ENCODE measurements at regions of chr3 and their contacts with region 1.

Region 1: GRCh38 chr3:138329127-138329983 is at the start of gene NME9:
- DNase-seq: peak; percentile 93
- H3K4me3 ChIP-seq: peak within 1 kb of the TSS; percentile 80
- H3K4me3 Mint-ChIP-seq: peak within 1 kb of the TSS; percentile 80
- H3K27ac Mint-ChIP-seq: peak within 1 kb of the TSS; percentile 68
- H3K4me1 ChIP-seq: no peaks in the 10 kb centered on the region
- H3K4me1 Mint-ChIP-seq: no peaks in the 10 kb centered on the region
- H3K27me3 ChIP-seq: no peaks in the 10 kb centered on the region
- H3K27me3 Mint-ChIP-seq: no peaks in the 10 kb centered on the region
- CTCF ChIP-seq: peak; percentile 40 to 87
- total RNA-seq, gene NME9: not detected in 2 replicates

Region 2: DNA sequence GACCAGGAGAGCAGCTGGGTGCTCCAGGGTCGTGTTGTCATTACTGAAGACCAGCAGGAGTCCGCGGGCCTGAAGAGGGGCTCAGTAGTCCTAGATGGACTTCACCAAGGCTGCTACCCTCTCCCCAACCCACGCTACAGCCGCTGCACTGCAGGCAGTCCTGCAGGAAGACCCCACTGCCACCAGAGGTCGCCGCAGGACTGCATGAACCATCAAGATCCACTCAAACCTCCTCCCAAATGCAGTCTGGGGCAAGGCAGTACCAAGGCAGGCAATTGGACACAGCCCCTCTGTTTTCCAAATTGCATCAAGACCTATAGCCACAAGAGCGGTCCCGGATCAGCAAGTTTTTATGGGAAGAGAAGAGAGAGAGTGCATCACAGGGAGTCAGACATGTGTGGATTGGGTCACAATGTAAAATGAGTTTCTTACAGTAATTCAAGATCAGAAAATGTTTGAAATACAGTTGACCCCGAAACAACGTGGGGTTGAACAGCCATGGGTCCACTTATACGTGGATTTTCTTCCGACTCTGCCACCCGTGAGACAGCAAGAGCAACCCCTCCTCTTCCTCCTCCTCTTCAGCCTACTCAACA is 260.7 kb before region 1 on chr3:
- CTCF ChIA-PET with region 1: no interaction called
- POLR2A ChIA-PET with region 1: no interaction called
- intact Hi-C with region 1: loop called (anchors 10 kb)
- DNase-seq: peak; percentile 75 to 82
- H3K4me3 ChIP-seq: no peak overlapping the region
- H3K4me3 Mint-ChIP-seq: no peak overlapping the region
- H3K27ac Mint-ChIP-seq: no peak overlapping the region
- H3K4me1 ChIP-seq: no peaks in the 10 kb centered on the region
- H3K4me1 Mint-ChIP-seq: no peaks in the 10 kb centered on the region
- H3K27me3 ChIP-seq: no peaks in the 10 kb centered on the region
- H3K27me3 Mint-ChIP-seq: no peaks in the 10 kb centered on the region
- CTCF ChIP-seq: peak; percentile 96 to 97

Region 3: DNA sequence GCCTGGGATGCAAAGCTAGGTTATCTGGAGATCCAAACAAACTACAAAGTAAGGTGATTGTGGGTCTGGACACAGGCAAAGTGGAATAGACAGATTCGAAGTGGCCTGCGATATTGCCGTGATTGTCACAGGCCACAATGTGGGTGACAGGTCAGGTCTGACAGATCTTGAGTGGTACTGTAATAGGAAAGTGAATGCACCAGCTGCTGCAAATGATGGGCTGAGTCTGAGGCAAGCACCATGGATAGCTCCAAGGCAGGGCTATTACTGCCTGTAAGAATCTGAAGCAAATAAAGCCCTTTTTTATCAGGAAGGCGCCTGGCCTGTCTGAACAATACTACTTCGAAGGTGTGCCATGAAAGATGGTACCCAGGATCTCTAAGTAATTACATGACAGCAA is 132.3 kb before region 1 on chr3:
- CTCF ChIA-PET with region 1: no interaction called
- POLR2A ChIA-PET with region 1: no interaction called
- intact Hi-C with region 1: no loop called
- DNase-seq: peak; percentile 46 to 49
- H3K4me3 ChIP-seq: no peak overlapping the region
- H3K4me3 Mint-ChIP-seq: no peak overlapping the region
- H3K27ac Mint-ChIP-seq: no peak overlapping the region
- H3K4me1 ChIP-seq: no peaks in the 10 kb centered on the region
- H3K4me1 Mint-ChIP-seq: no peaks in the 10 kb centered on the region
- H3K27me3 ChIP-seq: no peaks in the 10 kb centered on the region
- H3K27me3 Mint-ChIP-seq: no peaks in the 10 kb centered on the region
- CTCF ChIP-seq: no peak

Region 4: GRCh38 chr3:138347960-138348753 is 18.8 kb after region 1 on chr3 and contains the start of gene MRAS:
- CTCF ChIA-PET with region 1: interaction called, 10 read pairs
- POLR2A ChIA-PET with region 1: no interaction called
- intact Hi-C with region 1: loop called (anchors 1 kb)
- DNase-seq: peak; percentile 78 to 85
- H3K4me3 ChIP-seq: peak within 1 kb of the TSS; percentile 48
- H3K4me3 Mint-ChIP-seq: peak within 1 kb of the TSS; percentile 93
- H3K27ac Mint-ChIP-seq: peak within 1 kb of the TSS; percentile 93
- H3K4me1 ChIP-seq: no peaks in the 10 kb centered on the region
- H3K4me1 Mint-ChIP-seq: peaks cover 6% of the 10 kb centered on the region
- H3K27me3 ChIP-seq: no peaks in the 10 kb centered on the region
- H3K27me3 Mint-ChIP-seq: no peaks in the 10 kb centered on the region
- CTCF ChIP-seq: peak; percentile 49 to 55
- total RNA-seq, gene MRAS: 8.5 and 11.4 TPM in 2 replicates

Region 5: DNA sequence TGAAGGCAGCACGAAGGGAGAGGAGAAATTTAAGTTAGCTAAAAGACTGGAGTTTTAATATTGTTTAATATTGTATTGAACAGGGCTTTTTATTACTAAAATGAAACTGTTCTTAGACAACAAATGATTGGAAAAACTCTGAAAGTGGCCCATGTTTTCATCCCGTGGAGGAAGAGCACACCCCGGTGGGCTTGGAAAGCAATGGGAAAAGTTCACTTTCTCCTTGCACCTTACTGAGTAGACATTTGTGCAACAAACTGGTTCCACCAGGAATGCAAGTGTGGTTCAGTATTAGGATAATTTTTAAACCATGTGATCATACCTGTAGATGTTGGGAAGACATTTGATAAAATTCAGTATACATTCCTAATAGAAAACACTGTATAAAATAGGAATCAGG is 96.9 kb after region 1 on chr3:
- CTCF ChIA-PET with region 1: no interaction called
- POLR2A ChIA-PET with region 1: no interaction called
- intact Hi-C with region 1: loop called (anchors 1 kb)
- DNase-seq: peak in 1 of 2 experiments; percentile 32
- H3K4me3 ChIP-seq: no peak overlapping the region
- H3K4me3 Mint-ChIP-seq: no peak overlapping the region
- H3K27ac Mint-ChIP-seq: no peak overlapping the region
- H3K4me1 ChIP-seq: no peaks in the 10 kb centered on the region
- H3K4me1 Mint-ChIP-seq: no peaks in the 10 kb centered on the region
- H3K27me3 ChIP-seq: no peaks in the 10 kb centered on the region
- H3K27me3 Mint-ChIP-seq: no peaks in the 10 kb centered on the region
- CTCF ChIP-seq: peak in 1 of 2 experiments; percentile 45

Measured in Caco-2 (cell line).